Breast epithelium (tissue), 4 donors: ENCODE measurements at regions of chr13 and their contacts with region 1.

Region 1: DNA sequence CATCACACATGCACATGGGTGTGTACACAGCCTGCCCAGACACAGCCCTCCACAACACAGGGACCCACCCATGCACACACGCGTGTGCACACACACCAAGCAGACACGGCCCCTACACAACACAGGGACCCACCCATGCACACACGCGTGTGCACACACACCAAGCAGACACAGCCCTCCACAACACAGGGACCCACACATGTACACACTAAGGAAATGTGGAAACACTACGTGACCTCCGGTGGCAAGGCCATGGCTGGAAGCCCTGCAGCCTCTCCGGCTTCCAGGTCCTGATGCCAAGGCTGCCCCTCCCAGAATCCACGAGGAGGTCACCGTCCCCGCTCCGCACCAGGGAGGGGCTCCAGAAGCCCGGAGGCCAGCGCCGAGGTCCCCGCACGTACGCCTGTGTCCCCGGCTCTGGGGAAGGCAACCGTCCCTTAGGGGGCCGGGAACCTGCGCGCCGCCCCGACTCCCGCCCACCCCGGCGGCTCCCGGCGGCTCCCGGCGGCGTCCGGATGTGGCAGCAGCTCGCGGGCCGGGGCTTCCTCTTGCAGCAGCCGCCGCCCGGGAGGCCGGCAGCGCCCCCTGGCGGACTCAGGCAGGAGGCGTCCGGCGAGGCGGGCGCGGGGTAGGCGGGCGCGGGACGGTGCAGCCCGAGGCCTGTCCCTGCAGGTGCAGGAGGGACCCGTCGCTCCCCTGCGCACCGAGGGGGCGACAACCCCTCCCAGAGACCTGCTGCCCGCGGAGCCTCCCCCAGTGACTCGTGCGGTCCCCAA is 29.8 kb upstream of the GRTP1 start:
- DNase-seq: peak in 1 of 2 donors; percentile 48
- H3K4me3 ChIP-seq: peak overlapping the region; percentile 52 to 89 (median 70)
- H3K27ac ChIP-seq: peak overlapping the region in 1 of 2 donors; percentile 30
- H3K4me1 ChIP-seq: no peaks in the 10 kb centered on the region
- H3K27me3 ChIP-seq: no peaks in the 10 kb centered on the region
- CTCF ChIP-seq: peak; percentile 16 to 91 (median 28)
- POLR2A ChIP-seq: no peak

Region 2: GRCh38 chr13:112486386-112487126 is 907.2 kb before region 1 on chr13:
- intact Hi-C with region 1: no loop called
- DNase-seq: no peak
- H3K4me3 ChIP-seq: no peak overlapping the region
- H3K27ac ChIP-seq: no peak overlapping the region
- H3K4me1 ChIP-seq: no peaks in the 10 kb centered on the region
- H3K27me3 ChIP-seq: no peaks in the 10 kb centered on the region
- CTCF ChIP-seq: no peak
- POLR2A ChIP-seq: no peak

Region 3: DNA sequence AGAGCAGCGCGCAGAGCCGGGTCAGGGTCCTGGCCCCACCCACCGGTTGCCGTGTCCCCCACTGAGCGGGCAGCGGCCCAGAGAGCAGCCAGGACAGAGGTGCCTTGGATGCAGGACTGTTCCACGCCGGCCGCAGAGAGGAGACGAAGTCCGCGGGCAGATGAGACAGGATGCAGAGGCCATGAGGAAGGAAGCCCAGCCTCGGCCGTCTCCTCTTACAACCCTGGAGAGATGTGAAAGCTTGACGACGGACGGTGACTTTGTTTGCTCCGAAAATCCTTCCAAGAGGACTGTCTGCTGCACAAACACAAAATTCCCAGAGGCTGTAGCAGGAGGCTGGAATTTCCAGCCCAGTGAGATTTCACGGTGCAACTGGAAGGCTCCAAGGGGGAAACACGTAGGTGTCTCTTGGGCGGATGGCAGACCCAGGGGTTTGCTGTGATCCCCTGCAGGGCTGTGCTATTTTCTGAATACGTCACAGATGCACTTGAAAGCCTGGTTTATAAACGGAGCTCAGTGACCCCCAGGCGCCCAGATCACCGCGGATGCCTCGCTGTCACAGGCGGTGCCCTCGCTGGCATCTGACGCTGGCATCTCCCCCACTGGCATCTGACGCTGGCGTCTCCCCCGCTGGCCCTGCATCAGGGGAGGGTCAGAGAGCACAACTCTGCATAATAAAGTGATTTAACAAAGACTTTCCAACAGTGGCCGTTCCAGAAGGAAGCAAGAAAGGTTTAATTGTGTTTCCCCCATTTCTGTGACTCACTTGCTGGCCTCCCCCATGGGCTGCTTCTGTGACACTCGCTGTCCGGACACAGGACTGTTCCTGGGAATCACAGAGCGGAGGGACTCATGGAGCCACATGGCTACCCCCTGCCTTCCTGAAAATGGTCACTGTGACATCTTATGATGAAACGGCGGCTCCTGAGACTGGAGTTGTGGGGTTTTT is 642.1 kb after region 1 on chr13:
- intact Hi-C with region 1: loop called (anchors 5 kb)
- DNase-seq: peak; percentile 37 to 69
- H3K4me3 ChIP-seq: peak overlapping the region in 2 of 3 donors; percentile 28 to 49
- H3K27ac ChIP-seq: peak overlapping the region; percentile 33 to 64
- H3K4me1 ChIP-seq: peaks cover 5 to 6% of the 10 kb centered on the region in 2 donors
- H3K27me3 ChIP-seq: no peaks in the 10 kb centered on the region
- CTCF ChIP-seq: no peak
- POLR2A ChIP-seq: no peak